Activated CD8-positive, alpha-beta T cell treated with anti-CD3 and anti-CD28 coated beads, Interleukin-2, amount 10 ng/mL, durations not matched to agents 7 days and 5 days (primary cell): ENCODE measurements at regions of chr15 and their contacts with region 1.

Region 1: DNA sequence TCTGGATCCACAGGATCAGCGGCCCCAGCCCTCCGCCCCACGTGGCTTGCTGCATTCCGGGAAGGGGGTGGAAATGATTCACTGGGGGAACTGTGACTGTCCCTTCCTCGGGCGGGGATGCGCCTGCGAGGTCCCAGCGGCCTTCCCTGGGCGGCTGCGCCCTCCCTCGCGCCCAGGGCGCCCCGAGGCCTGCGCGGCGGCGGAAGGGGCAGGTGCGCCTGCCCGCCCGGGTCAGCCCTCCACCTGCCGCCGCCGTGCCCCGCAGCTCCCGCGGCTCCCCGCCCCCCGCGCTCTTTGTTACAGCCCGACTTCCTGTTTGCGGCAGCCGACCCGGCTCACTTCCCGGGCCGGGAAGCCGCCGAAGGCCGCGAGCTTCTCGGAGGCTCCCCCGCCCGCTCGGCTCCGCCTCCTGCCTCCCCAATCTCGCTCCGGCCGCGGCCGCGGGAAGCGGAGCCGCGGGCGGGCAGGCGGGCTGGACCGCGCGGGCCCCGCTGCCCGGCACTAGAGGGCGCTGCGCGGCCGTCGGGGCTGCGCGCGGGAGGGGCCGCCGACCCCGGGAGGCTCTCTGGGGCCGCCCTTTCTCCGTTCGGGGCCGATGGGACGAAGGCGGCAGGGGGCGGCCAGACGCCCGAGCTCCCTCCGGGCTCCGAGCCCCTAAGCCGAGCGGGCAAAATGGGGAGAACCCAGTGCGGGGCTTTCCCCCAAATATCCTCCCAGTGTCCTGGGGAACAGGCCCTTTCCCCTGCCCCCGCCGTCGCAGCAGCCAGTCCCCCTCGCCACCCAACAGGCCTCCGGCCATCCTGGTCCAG is 11.5 kb upstream of the CHAC1 start:
- DNase-seq: peak; percentile 77
- ATAC-seq: peak; percentile 84
- H3K4me3 Mint-ChIP-seq: peak overlapping the region; percentile 73
- H3K27ac Mint-ChIP-seq: no peak overlapping the region
- H3K4me1 Mint-ChIP-seq: peaks cover 43% of the 10 kb centered on the region
- H3K27me3 Mint-ChIP-seq: no peaks in the 10 kb centered on the region

Region 2: DNA sequence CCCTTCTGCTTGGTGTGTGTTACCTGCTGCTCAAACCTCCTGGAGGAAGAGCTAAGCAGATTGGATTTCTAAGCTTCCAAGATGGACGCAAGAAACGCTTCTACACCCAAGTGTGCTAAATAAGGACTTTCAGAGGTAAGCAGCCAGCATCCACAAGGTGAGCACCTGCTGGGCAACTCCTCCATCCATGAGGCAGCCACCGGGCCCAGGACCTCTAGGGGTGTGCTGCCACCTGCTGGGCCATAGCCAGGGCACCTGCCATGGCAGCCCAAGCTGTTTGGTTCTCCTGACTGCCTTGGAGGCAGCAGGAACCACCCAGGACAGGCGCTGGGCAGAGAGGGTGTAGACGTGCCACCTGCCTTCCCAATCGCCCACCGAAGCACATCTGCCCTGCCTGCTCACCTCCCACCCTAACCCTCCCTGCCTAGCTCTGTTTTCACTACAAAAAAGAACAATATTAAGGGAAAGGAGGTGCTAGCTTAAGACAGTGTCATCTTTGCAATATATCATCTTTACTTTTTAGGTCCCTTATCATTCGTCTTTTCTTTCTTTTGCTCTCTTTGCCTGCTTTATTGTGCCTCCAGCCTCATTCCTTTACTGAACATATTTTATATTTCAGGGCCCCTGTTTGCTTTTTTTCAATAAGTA is 159.0 kb before region 1 on chr15:
- CTCF ChIA-PET with region 1: no interaction called
- POLR2A ChIA-PET with region 1: no interaction called
- DNase-seq: peak; percentile 85
- ATAC-seq: peak; percentile 98
- H3K4me3 Mint-ChIP-seq: no peak overlapping the region
- H3K27ac Mint-ChIP-seq: no peak overlapping the region
- H3K4me1 Mint-ChIP-seq: peaks cover 24% of the 10 kb centered on the region
- H3K27me3 Mint-ChIP-seq: no peaks in the 10 kb centered on the region

Region 3: DNA sequence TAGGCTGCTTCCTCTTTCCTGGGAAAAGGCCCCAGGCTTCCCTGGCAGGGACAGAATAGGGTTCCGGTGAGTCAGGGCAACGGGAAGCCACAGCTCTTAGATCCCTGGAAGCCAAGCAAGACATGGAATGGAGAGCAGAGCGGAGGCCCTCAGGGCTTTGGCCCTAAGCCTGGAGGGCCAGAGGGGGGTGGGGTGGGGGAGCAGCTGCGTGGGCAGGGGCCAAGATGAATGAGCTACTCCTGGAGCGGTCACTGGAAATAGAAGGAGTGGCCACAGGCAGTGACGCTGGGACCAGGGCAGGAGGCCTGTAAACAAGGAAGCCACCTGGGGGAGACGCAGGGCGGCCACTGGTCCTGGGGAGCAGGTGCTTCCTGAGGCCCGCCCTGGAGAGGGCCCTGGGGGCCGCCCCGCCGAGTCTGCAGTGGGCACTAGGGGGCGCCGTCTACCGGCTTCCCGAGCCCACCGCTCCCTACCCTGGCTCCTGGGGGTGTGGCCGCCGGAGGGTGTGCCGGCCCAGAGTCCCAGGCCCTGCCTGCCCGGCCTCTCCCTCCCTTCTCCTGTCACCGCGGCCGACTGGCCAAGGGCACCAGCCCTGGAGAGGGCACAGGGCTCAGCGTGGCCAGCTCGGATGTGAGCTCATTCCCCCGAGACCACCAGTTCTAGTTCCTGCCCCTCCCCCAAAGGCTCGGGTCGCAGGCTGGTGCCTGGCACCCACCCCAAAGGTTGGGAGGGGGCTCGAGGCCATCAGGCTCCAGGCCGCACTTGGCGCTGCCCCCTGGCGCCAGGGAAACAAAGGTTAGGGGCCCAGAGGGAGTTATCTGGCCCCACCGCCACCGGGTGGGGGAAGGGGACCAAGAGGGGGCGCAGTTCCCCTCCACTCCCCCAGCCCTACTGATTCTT is 35.4 kb before region 1 on chr15:
- CTCF ChIA-PET with region 1: interaction called, 40 read pairs
- POLR2A ChIA-PET with region 1: interaction called, 3 read pairs
- DNase-seq: peak; percentile 81
- ATAC-seq: peak; percentile 81
- H3K4me3 Mint-ChIP-seq: peak overlapping the region; percentile 71
- H3K27ac Mint-ChIP-seq: peak overlapping the region; percentile 70
- H3K4me1 Mint-ChIP-seq: peaks cover 48% of the 10 kb centered on the region
- H3K27me3 Mint-ChIP-seq: no peaks in the 10 kb centered on the region

Region 4: GRCh38 chr15:40952901-40953712 is 11.4 kb after region 1 on chr15 and contains the start of gene CHAC1:
- CTCF ChIA-PET with region 1: interaction called, 67 read pairs
- POLR2A ChIA-PET with region 1: interaction called, 21 read pairs
- DNase-seq: peak; percentile 97
- ATAC-seq: peak; percentile 94
- H3K4me3 Mint-ChIP-seq: peak within 1 kb of the TSS; percentile 91
- H3K27ac Mint-ChIP-seq: peak within 1 kb of the TSS; percentile 90
- H3K4me1 Mint-ChIP-seq: peaks cover 39% of the 10 kb centered on the region
- H3K27me3 Mint-ChIP-seq: peaks cover 4% of the 10 kb centered on the region
- total RNA-seq, gene CHAC1: 8.3 to 8.9 TPM

Region 5: DNA sequence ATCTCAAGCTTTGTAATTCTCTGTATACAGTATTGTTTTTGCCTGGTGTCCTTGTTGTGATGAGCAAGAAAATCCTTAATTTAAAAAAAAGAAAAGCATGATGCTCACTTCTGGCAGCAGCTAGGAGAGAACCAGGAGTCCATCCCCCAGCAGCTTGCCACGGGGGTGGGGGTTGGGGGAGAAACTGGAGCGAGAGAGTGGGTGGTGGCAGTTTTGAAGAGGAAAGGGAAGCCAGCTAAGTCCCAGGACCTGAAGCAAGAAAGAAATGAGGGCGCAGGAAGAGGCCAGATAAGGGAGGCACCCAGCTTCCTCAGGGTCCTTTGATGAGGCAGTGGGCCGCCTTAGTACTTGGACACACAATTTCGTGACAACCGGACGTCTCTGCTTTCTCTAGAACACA is 35.1 kb after region 1 on chr15:
- CTCF ChIA-PET with region 1: interaction called, 10 read pairs
- POLR2A ChIA-PET with region 1: no interaction called
- DNase-seq: no peak
- ATAC-seq: no peak
- H3K4me3 Mint-ChIP-seq: no peak overlapping the region
- H3K27ac Mint-ChIP-seq: no peak overlapping the region
- H3K4me1 Mint-ChIP-seq: no peaks in the 10 kb centered on the region
- H3K27me3 Mint-ChIP-seq: no peaks in the 10 kb centered on the region

Region 6: DNA sequence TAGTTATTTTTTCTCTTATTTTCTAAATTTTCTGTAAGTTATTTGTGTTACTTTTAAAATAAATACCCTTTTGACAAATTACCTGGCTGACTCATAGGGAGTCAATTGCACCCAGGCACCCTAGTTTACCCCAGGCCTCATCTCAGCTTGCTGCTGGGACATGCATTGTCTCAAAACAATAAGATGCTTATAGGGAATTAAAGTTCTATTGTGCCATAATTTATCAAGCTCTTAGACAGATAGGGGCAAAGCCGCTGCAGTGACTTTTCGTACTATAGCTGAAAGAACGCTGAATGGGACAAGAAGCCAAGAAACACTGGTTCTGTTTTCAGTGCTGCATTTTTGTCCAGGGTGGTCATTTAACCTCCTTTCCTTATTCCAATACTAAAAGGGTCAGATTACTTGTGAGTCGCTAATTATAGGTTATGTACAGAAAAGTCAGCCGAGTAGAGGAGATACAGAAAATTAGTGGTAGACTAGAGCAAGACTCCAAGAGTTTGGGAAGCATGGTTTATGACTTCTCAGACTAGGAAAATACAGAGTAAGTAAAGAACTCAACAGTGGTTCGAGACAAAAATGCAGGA is 238.6 kb after region 1 on chr15:
- CTCF ChIA-PET with region 1: interaction called, 12 read pairs
- POLR2A ChIA-PET with region 1: no interaction called
- DNase-seq: no peak
- ATAC-seq: no peak
- H3K4me3 Mint-ChIP-seq: no peak overlapping the region
- H3K27ac Mint-ChIP-seq: no peak overlapping the region
- H3K4me1 Mint-ChIP-seq: no peaks in the 10 kb centered on the region
- H3K27me3 Mint-ChIP-seq: peaks cover 9% of the 10 kb centered on the region

Region 7: DNA sequence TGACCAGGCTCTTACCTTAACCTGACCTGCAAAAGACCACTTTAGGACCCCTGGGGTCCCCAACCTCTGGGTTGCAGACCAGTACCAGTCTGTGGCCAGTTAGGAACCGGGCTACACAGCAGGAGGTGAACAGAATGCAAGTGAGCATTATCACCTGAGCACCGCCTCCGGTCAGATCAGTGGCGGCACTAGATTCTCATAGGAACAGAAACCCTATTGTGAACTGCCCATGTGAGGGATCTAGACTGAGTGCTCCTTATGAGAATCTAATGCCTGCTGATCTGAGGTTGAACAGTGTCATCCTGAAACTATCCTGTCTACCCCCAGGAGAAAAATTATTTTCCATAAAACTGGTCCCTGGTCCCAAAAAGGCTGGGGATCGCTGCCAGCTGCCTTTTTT is 309.7 kb after region 1 on chr15:
- CTCF ChIA-PET with region 1: no interaction called
- POLR2A ChIA-PET with region 1: no interaction called
- DNase-seq: no peak
- ATAC-seq: no peak
- H3K4me3 Mint-ChIP-seq: no peak overlapping the region
- H3K27ac Mint-ChIP-seq: no peak overlapping the region
- H3K4me1 Mint-ChIP-seq: no peaks in the 10 kb centered on the region
- H3K27me3 Mint-ChIP-seq: no peaks in the 10 kb centered on the region